CD8-positive, alpha-beta memory T cell (primary cell): ENCODE measurements at regions of chr2 and their contacts with region 1.

Region 1: GRCh38 chr2:39227628-39228412 is 15.9 kb downstream of the CDKL4 start:
- DNase-seq: peak; percentile 66 to 84 (median 70)
- H3K4me3 ChIP-seq: no peak overlapping the region
- H3K4me3 Mint-ChIP-seq: peak overlapping the region; percentile 9 to 84 (median 72)
- H3K27ac ChIP-seq: no peak overlapping the region
- H3K27ac Mint-ChIP-seq: peak overlapping the region in 4 of 8 donors; percentile 60 to 88 (median 72)
- H3K4me1 ChIP-seq: peaks cover 13% of the 10 kb centered on the region
- H3K4me1 Mint-ChIP-seq: peaks cover 18 to 28% (median 26%) of the 10 kb centered on the region in 3 donors
- H3K27me3 ChIP-seq: no peaks in the 10 kb centered on the region
- H3K27me3 Mint-ChIP-seq: no peaks in the 10 kb centered on the region

Region 2: GRCh38 chr2:39059366-39059952 is 168.4 kb before region 1 on chr2:
- CTCF ChIA-PET with region 1: interaction called, 168 read pairs
- POLR2A ChIA-PET with region 1: interaction called, 3 read pairs
- DNase-seq: peak in 2 of 5 donors; percentile 48 to 59
- H3K4me3 ChIP-seq: no peak overlapping the region
- H3K4me3 Mint-ChIP-seq: no peak overlapping the region
- H3K27ac ChIP-seq: no peak overlapping the region
- H3K27ac Mint-ChIP-seq: peak overlapping the region in 3 of 8 donors; percentile 5 to 23 (median 6)
- H3K4me1 ChIP-seq: no peaks in the 10 kb centered on the region
- H3K4me1 Mint-ChIP-seq: peaks cover 0 to 32% (median 14%) of the 10 kb centered on the region in 3 donors
- H3K27me3 ChIP-seq: no peaks in the 10 kb centered on the region
- H3K27me3 Mint-ChIP-seq: no peaks in the 10 kb centered on the region

Region 3: DNA sequence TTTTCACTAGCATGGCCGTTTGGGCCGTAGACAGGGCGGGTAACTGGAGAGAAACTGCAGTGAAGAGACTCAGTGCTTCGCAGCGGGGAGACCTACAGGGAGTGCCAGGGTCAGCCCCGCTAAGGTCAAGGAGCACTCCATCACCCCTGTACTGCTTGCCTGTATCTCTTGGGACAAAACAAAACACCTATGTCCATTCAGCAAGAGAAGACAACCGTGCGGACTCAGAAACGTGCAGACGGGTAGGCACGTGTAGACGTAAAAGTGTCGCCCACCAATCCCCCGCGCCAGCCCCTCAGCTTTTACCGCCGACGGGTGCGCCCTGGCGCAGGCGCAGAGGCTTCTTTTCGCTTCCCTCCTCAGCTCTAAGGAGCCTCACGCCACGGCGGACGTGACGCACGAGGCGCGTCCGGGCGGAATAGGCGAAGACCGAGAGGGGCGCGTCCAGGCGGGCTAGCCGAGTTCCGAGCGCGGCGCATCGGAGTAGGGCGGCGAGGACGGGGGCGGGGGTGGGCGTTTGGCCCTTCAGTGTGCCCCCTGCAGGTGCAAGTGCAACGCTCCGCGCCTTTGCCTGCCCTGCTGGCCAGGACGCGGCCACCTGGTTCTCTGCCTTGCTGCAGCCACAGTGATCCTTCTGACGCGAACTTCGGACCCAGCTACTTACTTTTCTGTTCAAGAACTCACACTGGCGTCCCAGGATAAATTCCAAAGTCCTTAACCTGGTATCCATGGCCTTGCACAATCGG is 103.6 kb before region 1 on chr2:
- CTCF ChIA-PET with region 1: interaction called, 123 read pairs
- POLR2A ChIA-PET with region 1: interaction called, 65 read pairs
- DNase-seq: peak; percentile 94 to 98 (median 96)
- H3K4me3 ChIP-seq: peak overlapping the region; percentile 88
- H3K4me3 Mint-ChIP-seq: peak overlapping the region; percentile 87 to 95 (median 94)
- H3K27ac ChIP-seq: peak overlapping the region; percentile 91
- H3K27ac Mint-ChIP-seq: peak overlapping the region; percentile 90 to 99 (median 96)
- H3K4me1 ChIP-seq: peaks cover 32% of the 10 kb centered on the region
- H3K4me1 Mint-ChIP-seq: peaks cover 48 to 64% (median 61%) of the 10 kb centered on the region in 3 donors
- H3K27me3 ChIP-seq: no peaks in the 10 kb centered on the region
- H3K27me3 Mint-ChIP-seq: no peaks in the 10 kb centered on the region

Region 4: GRCh38 chr2:39175026-39175812 is 52.6 kb before region 1 on chr2:
- CTCF ChIA-PET with region 1: interaction called, 15 read pairs
- POLR2A ChIA-PET with region 1: no interaction called
- DNase-seq: no peak
- H3K4me3 ChIP-seq: no peak overlapping the region
- H3K4me3 Mint-ChIP-seq: no peak overlapping the region
- H3K27ac ChIP-seq: no peak overlapping the region
- H3K27ac Mint-ChIP-seq: peak overlapping the region in 1 of 8 donors; percentile 44
- H3K4me1 ChIP-seq: no peaks in the 10 kb centered on the region
- H3K4me1 Mint-ChIP-seq: no peaks in the 10 kb centered on the region
- H3K27me3 ChIP-seq: no peaks in the 10 kb centered on the region
- H3K27me3 Mint-ChIP-seq: peaks cover 0 to 3% of the 10 kb centered on the region in 2 donors

Region 5: GRCh38 chr2:39202639-39203369 is 25.0 kb before region 1 on chr2:
- CTCF ChIA-PET with region 1: no interaction called
- POLR2A ChIA-PET with region 1: no interaction called
- DNase-seq: no peak
- H3K4me3 ChIP-seq: no peak overlapping the region
- H3K4me3 Mint-ChIP-seq: peak overlapping the region in 1 of 7 donors; percentile 78
- H3K27ac ChIP-seq: no peak overlapping the region
- H3K27ac Mint-ChIP-seq: peak overlapping the region in 1 of 8 donors; percentile 6
- H3K4me1 ChIP-seq: no peaks in the 10 kb centered on the region
- H3K4me1 Mint-ChIP-seq: peaks cover 0 to 17% (median 2%) of the 10 kb centered on the region in 3 donors
- H3K27me3 ChIP-seq: no peaks in the 10 kb centered on the region
- H3K27me3 Mint-ChIP-seq: peaks cover 0 to 3% of the 10 kb centered on the region in 2 donors

Region 6: DNA sequence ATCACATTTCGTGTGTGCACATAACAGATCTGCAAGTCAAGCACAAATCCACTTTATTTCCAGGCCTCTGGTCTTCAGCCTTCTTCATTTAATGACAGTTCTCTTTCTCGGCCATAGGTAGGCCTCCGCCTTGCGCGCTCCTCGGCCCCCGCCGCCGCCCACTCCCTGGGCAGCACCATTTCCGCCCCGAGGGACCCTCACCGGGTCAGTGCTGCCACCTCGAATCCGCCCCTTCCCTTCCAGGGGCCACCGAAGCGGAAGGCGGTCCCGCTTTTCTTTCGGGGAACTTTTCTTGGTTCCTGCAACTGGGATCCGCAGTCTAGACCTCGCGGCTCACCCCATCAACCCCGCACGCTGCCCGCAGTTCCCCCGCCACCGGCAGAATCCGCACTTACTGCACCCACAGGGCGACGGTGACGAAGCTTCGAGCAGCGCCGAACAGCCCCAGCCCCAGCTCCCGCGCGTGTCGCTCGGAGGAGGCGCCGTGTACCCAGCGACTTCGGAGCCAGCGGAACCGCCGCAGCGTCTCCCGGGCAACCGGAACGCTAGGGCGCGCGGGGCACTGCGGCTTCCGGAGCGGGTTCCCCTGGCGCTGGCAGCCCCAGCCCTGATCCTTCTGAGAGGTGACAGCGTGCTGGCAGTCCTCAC is 15.8 kb after region 1 on chr2 and contains the start of gene CDKL4:
- CTCF ChIA-PET with region 1: interaction called, 15 read pairs
- POLR2A ChIA-PET with region 1: no interaction called
- DNase-seq: peak in 4 of 5 donors; percentile 8 to 59 (median 14)
- H3K4me3 ChIP-seq: peak within 1 kb of the TSS; percentile 52
- H3K4me3 Mint-ChIP-seq: peak within 1 kb of the TSS; percentile 86 to 97 (median 88)
- H3K27ac ChIP-seq: no peak within 1 kb of the TSS
- H3K27ac Mint-ChIP-seq: peak within 1 kb of the TSS; percentile 5 to 87 (median 62)
- H3K4me1 ChIP-seq: peaks cover 3% of the 10 kb centered on the region
- H3K4me1 Mint-ChIP-seq: peaks cover 12 to 22% (median 19%) of the 10 kb centered on the region in 3 donors
- H3K27me3 ChIP-seq: no peaks in the 10 kb centered on the region
- H3K27me3 Mint-ChIP-seq: no peaks in the 10 kb centered on the region
- total RNA-seq, gene CDKL4: 0.13 to 0.31 TPM